Gastrocnemius medialis (tissue), 4 donors: ENCODE measurements at regions of chr16 and their contacts with region 1.

Region 1: GRCh38 chr16:96935-97381 is 18.9 kb downstream of the MPG start:
- DNase-seq: peak; percentile 88 to 95
- ATAC-seq: peak; percentile 88 to 90
- H3K4me3 ChIP-seq: no peak overlapping the region
- H3K27ac ChIP-seq: peak overlapping the region; percentile 62 to 74 (median 68)
- H3K4me1 ChIP-seq: peaks cover 35 to 44% of the 10 kb centered on the region in 2 donors
- H3K27me3 ChIP-seq: no peaks in the 10 kb centered on the region
- CTCF ChIP-seq: peak; percentile 99 to 100 (median 100)
- POLR2A ChIP-seq: no peak

Region 2: GRCh38 chr16:65671-66137 is 31.3 kb before region 1 on chr16:
- in situ Hi-C with region 1: no loop called
- intact Hi-C with region 1: loop called (anchors 1 kb)
- DNase-seq: peak; percentile 65 to 80
- ATAC-seq: peak; percentile 46 to 65
- H3K4me3 ChIP-seq: no peak overlapping the region
- H3K27ac ChIP-seq: peak overlapping the region in 1 of 4 donors; percentile 1
- H3K4me1 ChIP-seq: peaks cover 34 to 36% of the 10 kb centered on the region in 2 donors
- H3K27me3 ChIP-seq: no peaks in the 10 kb centered on the region
- CTCF ChIP-seq: peak; percentile 98 to 99 (median 99)
- POLR2A ChIP-seq: no peak

Region 3: DNA sequence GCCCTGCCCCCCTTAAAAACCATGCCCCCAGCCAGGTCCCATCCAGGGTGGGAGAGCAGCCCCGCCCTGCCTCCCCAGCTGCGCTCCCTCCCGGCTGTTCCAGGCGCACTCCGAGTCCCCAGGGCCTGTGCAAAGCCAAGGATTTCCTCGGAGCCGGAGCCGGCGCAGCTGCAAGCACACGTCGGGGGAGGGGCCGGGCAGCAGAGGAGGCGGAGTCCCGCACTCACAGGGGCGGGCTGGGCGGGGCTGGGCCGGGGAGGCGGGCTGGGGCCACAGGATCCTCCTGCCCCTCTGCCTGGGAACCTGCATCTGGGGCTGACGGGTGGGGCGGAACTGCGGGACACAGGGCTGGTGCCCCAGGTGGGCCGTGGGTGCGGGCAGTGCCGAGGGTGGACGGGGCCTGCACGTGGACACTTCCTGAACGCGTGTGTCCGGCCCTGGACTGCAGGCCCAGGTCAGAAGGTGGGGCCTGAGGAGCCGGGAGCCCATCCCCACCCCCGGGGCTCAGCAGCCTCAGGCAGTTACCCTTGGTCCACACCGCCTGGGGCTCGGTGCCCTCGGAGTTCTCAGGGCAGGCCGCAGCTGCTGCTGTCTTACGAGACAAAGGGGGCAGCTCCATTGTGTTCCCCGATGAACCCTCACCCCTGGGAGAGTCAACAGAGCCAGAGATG is 951.6 kb after region 1 on chr16:
- in situ Hi-C with region 1: no loop called
- intact Hi-C with region 1: no loop called
- DNase-seq: no peak
- ATAC-seq: no peak
- H3K4me3 ChIP-seq: no peak overlapping the region
- H3K27ac ChIP-seq: no peak overlapping the region
- H3K4me1 ChIP-seq: peaks cover 0 to 4% of the 10 kb centered on the region in 2 donors
- H3K27me3 ChIP-seq: peaks cover 49 to 79% (median 66%) of the 10 kb centered on the region in 3 donors
- CTCF ChIP-seq: no peak
- POLR2A ChIP-seq: no peak